ENCODE measurements at regions of chr6 and their contacts with region 1.

Region 1: GRCh38 chr6:108589287-108589791 is 28.6 kb downstream of the FOXO3 start:
- DNase-seq: peak; percentile 85
- H3K4me3 ChIP-seq: no peak overlapping the region
- H3K27ac ChIP-seq: peak overlapping the region; percentile 66
- H3K4me1 ChIP-seq: peaks cover 54% of the 10 kb centered on the region
- H3K27me3 ChIP-seq: no peaks in the 10 kb centered on the region
- CTCF ChIP-seq: no peak
- POLR2A ChIP-seq: peak; percentile 20

Region 2: DNA sequence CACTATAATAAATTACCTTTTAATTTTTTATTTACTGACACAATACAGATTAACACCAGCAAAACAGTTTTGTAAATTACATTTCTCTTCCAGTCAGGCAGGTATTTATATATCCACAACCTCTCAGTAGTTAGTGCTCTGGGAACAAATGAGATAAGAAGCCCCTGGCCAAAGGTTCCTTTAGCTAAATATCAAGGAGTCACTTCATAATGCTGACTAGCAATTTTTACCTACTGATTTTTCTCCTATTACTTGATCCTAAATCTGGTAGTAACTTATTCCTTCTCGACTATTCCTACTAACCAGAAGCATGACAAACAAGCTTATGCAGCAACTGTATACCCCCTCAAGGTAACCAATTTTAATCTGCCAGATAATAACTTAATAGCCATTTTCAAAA is 677.6 kb before region 1 on chr6:
- CTCF ChIA-PET with region 1: no interaction called
- POLR2A ChIA-PET with region 1: no interaction called
- dilution Hi-C with region 1: no loop called
- intact Hi-C with region 1: no loop called
- DNase-seq: no peak
- H3K4me3 ChIP-seq: no peak overlapping the region
- H3K27ac ChIP-seq: no peak overlapping the region
- H3K4me1 ChIP-seq: no peaks in the 10 kb centered on the region
- H3K27me3 ChIP-seq: no peaks in the 10 kb centered on the region
- CTCF ChIP-seq: no peak
- POLR2A ChIP-seq: no peak

Region 3: DNA sequence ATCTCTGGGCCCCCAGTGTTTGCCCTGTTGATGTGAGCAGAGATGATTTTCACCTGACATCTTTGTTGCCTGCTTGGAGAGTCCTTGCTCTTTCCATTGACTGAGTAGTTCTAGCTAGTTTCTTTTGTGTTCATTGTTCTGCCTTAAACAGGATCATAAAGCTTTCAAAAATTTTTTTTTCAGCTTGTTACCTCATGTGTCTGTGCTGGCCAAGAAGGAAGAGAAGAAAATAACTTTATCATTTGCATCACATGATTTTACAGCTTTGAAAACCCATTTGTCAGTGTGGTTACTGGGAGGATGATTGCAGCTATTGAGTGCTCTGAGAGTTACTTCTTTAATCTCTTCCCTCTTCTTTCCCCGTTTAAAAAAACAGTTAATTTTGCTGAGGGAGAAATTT is 12.6 kb before region 1 on chr6:
- CTCF ChIA-PET with region 1: interaction called, 10 read pairs
- POLR2A ChIA-PET with region 1: interaction called, 5 read pairs
- dilution Hi-C with region 1: no loop called
- intact Hi-C with region 1: no loop called
- DNase-seq: no peak
- H3K4me3 ChIP-seq: no peak overlapping the region
- H3K27ac ChIP-seq: no peak overlapping the region
- H3K4me1 ChIP-seq: peaks cover 12% of the 10 kb centered on the region
- H3K27me3 ChIP-seq: no peaks in the 10 kb centered on the region
- CTCF ChIP-seq: no peak
- POLR2A ChIP-seq: no peak

Region 4: GRCh38 chr6:108630050-108630714 is 40.8 kb after region 1 on chr6:
- CTCF ChIA-PET with region 1: no interaction called
- POLR2A ChIA-PET with region 1: no interaction called
- dilution Hi-C with region 1: no loop called
- intact Hi-C with region 1: no loop called
- DNase-seq: no peak
- H3K4me3 ChIP-seq: no peak overlapping the region
- H3K27ac ChIP-seq: no peak overlapping the region
- H3K4me1 ChIP-seq: peaks cover 3% of the 10 kb centered on the region
- H3K27me3 ChIP-seq: no peaks in the 10 kb centered on the region
- CTCF ChIP-seq: no peak
- POLR2A ChIP-seq: no peak

Region 5: GRCh38 chr6:108673602-108674001 is 84.3 kb after region 1 on chr6:
- CTCF ChIA-PET with region 1: no interaction called
- POLR2A ChIA-PET with region 1: no interaction called
- dilution Hi-C with region 1: no loop called
- intact Hi-C with region 1: loop called (anchors 5 kb)
- DNase-seq: peak; percentile 32
- H3K4me3 ChIP-seq: no peak overlapping the region
- H3K27ac ChIP-seq: no peak overlapping the region
- H3K4me1 ChIP-seq: peaks cover 11% of the 10 kb centered on the region
- H3K27me3 ChIP-seq: no peaks in the 10 kb centered on the region
- CTCF ChIP-seq: no peak
- POLR2A ChIP-seq: no peak

Region 6: DNA sequence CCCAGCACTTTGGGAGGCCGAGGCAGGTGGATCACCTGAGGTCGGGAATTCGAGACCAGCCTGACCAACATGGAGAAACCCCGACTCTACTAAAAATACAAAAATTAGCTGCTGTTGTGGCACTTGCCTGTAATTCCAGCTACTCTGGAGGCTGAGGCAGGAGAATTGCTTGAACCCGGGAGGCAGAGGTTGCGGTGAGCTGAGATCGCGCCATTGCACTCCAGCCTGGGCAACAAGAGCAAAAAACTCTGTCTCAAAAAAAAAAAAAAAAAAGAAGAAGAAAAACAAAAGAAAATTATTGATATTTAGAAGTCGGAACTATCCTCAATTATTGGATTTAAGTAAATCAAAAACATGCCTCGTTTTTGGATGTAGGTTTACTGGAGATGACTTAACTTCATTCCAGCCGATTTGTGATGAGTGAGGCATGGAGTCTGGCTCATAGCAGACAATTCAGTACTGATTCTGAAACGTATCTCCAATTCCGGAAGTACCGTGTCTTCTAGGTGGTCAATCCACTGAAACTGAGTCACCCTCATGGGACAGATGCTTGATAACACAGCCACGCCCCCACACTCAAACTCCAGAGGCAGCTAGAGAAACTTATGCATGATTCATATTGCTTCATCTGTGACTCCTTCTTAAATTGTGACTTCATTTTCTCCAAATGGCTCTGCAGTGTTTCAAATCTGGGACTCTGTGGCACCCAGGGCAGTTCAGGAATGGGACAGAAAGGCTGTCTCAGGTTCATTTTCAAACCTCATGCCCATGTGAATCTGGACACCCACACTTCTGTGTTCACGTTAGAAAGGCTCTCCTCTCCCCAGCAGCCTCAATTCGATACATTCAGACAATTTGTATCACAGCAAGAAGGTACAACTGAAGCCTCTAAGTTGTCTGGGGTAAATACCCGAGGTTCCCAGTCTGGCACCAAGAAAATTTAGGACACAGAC is 148.5 kb after region 1 on chr6:
- CTCF ChIA-PET with region 1: no interaction called
- POLR2A ChIA-PET with region 1: no interaction called
- dilution Hi-C with region 1: no loop called
- intact Hi-C with region 1: loop called (anchors 2 kb)
- DNase-seq: peak; percentile 82
- H3K4me3 ChIP-seq: no peak overlapping the region
- H3K27ac ChIP-seq: peak overlapping the region; percentile 62
- H3K4me1 ChIP-seq: peaks cover 40% of the 10 kb centered on the region
- H3K27me3 ChIP-seq: no peaks in the 10 kb centered on the region
- CTCF ChIP-seq: no peak
- POLR2A ChIP-seq: no peak

Region 7: DNA sequence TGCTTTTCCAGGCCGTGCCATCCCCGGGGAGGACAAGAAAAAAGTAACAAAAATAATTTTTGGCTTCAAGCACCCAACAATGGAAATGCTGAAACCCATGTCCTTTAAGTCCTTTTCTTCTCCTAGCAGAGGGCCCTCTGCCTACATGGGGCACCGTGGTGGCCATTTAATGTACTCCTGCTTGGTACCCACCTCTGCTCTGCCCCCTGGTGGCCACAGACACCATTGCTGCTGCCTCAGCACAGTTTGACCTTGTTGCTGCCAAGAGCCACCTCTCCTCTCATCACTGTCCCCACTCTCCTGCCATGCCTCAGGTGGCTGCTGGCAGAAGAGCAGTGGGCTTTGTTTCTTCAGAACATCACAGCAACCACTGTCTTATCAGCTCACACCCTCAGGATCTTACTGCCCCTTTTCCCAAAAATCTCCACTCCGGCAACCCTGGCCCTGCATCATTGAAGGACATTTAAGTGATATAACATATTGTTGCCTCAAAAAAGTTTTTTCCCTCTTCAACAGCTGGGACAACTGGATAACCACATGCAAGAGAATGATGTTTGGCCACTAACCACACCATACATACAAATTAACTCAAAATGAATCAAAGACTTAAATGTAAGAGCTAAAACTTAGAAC is 246.0 kb after region 1 on chr6:
- CTCF ChIA-PET with region 1: no interaction called
- POLR2A ChIA-PET with region 1: no interaction called
- dilution Hi-C with region 1: no loop called
- intact Hi-C with region 1: no loop called
- DNase-seq: peak; percentile 82
- H3K4me3 ChIP-seq: no peak overlapping the region
- H3K27ac ChIP-seq: no peak overlapping the region
- H3K4me1 ChIP-seq: no peaks in the 10 kb centered on the region
- H3K27me3 ChIP-seq: peaks cover 0 to 10% of the 10 kb centered on the region in 2 experiments
- CTCF ChIP-seq: peak; percentile 80 to 95
- POLR2A ChIP-seq: no peak